A549 (cell line): ENCODE measurements at regions of chr7 and their contacts with region 1.

Region 1: GRCh38 chr7:123748734-123749536 is at the start of gene WASL:
- DNase-seq: peak; percentile 73 to 94
- ATAC-seq: peak; percentile 80 to 88
- H3K4me3 ChIP-seq: peak within 1 kb of the TSS; percentile 97
- H3K27ac ChIP-seq: peak within 1 kb of the TSS; percentile 94 to 96
- H3K4me1 ChIP-seq: peaks cover 39% of the 10 kb centered on the region
- CTCF ChIP-seq: no peak
- EP300 ChIP-seq: no peak
- POLR2A ChIP-seq: peak; percentile 58
- RAD21 ChIP-seq: peak in 1 of 2 experiments; percentile 21; a peak in 1 of 5 replicates
- polyA plus RNA-seq, gene WASL: 18.5 and 21.2 TPM in 2 replicates

Region 2: DNA sequence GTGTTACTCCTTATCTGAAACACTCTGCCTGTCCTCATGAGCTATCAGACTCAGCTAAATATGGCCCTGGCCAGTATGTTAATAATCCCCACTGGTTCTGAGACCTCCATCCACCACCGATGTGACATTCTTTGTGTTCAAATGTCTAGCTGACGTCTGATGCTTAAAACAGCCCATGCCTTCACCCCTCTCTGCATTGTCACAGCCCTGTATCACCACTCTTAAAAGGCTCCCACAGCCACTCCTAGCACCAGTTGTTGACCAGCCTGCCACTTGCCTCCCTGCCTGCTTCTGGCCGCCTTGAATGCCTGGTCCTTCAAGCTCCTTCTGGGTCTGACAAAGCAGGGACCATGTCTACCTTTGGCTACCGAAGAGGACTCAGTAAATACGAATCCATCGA is 93.3 kb before region 1 on chr7 and contains the start of gene LMOD2:
- CTCF ChIA-PET with region 1: no interaction called
- POLR2A ChIA-PET with region 1: no interaction called
- DNase-seq: no peak
- ATAC-seq: no peak
- H3K4me3 ChIP-seq: no peak within 1 kb of the TSS
- H3K27ac ChIP-seq: no peak within 1 kb of the TSS
- H3K4me1 ChIP-seq: no peaks in the 10 kb centered on the region
- CTCF ChIP-seq: no peak
- EP300 ChIP-seq: no peak
- POLR2A ChIP-seq: no peak
- RAD21 ChIP-seq: no peak
- polyA plus RNA-seq, gene LMOD2: not detected in 2 replicates

Region 3: DNA sequence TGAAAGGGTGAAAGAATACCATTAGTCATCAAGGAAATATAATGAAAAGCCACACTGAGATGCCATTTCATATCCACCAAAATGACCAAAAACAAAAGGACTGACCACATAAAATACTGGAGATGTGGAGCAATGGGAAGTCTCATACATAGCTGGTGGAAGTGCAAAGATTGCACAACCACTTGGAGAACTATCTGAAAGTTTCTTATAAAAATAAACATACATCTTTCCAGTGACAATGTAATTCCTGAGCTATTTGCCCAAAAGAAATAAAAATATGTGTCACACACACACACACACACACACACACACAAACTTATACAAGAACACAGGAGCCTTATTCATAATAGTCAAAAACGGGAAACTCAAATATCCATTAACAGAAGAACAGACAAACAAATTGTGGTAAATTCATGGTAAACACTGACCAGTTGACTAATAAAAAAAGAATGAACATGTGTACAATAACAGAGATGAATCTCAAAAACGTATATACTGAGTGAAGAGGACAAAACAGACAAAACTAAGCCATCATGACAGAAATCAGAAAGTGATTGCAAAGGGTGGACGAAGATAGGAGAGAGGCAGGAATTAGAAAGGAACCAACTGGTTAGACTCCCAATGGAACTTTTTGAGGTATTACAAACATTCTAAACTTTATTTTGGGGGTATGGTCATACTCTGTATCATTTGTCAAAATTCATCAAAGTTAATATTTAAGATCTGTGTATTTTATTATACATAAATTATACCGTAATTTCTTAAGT is 21.7 kb before region 1 on chr7:
- CTCF ChIA-PET with region 1: interaction called, 4 read pairs
- POLR2A ChIA-PET with region 1: interaction called, 13 read pairs
- DNase-seq: peak in 1 of 2 experiments; percentile 57
- ATAC-seq: peak; percentile 64 to 73; a peak in 5 of 6 replicates
- H3K4me3 ChIP-seq: peak overlapping the region; percentile 17; the same call in 1 of the 3 replicates
- H3K27ac ChIP-seq: peak overlapping the region; percentile 22 to 69; a peak in 4 of 6 replicates
- H3K4me1 ChIP-seq: peaks cover 62% of the 10 kb centered on the region
- CTCF ChIP-seq: no peak
- EP300 ChIP-seq: no peak
- POLR2A ChIP-seq: no peak
- RAD21 ChIP-seq: no peak

Region 4: GRCh38 chr7:123734498-123734897 is 14.4 kb before region 1 on chr7:
- CTCF ChIA-PET with region 1: no interaction called
- POLR2A ChIA-PET with region 1: interaction called, 11 read pairs
- DNase-seq: no peak
- ATAC-seq: no peak
- H3K4me3 ChIP-seq: no peak overlapping the region
- H3K27ac ChIP-seq: no peak overlapping the region
- H3K4me1 ChIP-seq: peaks cover 8% of the 10 kb centered on the region; the same call in 2 of the 3 replicates
- CTCF ChIP-seq: no peak
- EP300 ChIP-seq: no peak
- POLR2A ChIP-seq: no peak
- RAD21 ChIP-seq: no peak

Region 5: DNA sequence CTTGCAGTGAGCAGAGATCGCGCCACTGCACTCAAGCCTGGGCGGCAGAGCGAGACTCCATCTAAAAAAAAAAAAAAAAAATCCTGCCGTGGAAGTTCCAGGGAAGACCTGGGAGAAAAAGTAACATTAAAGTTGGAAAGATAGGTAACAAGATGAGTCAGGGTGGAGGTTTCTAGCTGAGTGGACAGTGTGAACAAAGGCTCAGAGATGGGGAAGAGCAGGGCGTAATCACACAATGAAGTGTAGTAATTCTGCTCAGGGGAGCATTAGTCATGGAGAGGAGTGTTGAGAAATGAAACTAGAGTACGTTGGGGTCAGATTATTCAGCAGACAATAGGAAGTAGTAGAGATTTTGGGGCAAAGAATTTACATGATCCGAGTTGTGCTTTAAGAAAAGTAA is 21.4 kb after region 1 on chr7:
- CTCF ChIA-PET with region 1: interaction called, 11 read pairs
- POLR2A ChIA-PET with region 1: interaction called, 28 read pairs
- DNase-seq: peak; percentile 84 to 86
- ATAC-seq: peak; percentile 90 to 96
- H3K4me3 ChIP-seq: peak overlapping the region; percentile 10; the same call in 1 of the 3 replicates
- H3K27ac ChIP-seq: peak overlapping the region; percentile 53 to 80
- H3K4me1 ChIP-seq: peaks cover 60% of the 10 kb centered on the region
- CTCF ChIP-seq: no peak
- EP300 ChIP-seq: peak in 1 of 2 experiments; percentile 32; a peak in 1 of 5 replicates
- POLR2A ChIP-seq: no peak
- RAD21 ChIP-seq: no peak; a peak in 1 of 5 replicates